B cell (primary cell): ENCODE measurements at regions of chr13 and their contacts with region 1.

Region 1: DNA sequence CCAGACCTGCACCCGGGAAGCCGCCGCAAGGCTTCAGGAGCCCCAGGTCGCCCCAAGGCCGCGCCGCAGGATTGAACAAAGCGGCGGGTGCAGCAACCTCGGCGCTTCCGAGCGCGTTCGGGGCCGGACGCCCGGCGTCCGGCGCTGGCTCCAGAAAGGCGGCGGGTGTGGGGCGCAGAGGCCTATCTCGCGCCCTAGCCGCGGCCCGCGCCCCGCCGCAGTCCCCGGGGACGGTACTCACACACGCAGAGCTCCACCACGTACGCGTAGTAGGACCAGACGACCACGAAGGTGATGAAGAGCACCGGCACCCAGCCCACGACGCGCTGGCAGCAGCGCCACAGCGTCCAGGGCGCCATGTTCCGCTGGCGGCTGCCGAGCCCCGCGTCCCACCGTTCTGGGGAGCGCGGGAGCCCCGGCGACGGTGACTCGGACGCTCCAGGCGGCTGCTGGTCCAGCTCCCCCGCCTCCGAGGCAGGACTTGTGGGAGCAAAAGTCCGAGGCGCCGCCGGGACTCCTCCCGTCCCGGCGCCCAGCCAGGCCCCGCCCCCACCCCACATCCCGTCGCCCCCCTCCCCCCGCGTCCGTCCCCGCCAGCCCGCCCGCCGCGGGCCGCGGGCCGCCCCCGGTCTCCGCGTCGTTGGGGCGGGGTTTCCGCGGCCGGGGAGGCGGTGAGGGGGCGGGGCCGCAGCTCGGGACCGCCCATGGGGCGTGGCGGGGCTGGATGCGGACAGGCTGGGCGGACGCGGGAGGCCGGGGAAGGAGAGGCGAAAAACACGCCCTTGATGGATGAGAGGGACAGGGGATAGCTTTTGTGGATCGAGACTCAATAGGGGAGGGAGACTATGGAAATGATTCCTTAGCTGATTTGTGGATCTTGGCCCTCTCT is at the start of gene ZDHHC20:
- DNase-seq: peak; percentile 91
- ATAC-seq: peak; percentile 93
- H3K4me3 ChIP-seq: peak within 1 kb of the TSS; percentile 51 to 94 (median 85)
- H3K4me3 Mint-ChIP-seq: peak within 1 kb of the TSS; percentile 93
- H3K27ac ChIP-seq: peak within 1 kb of the TSS; percentile 64 to 86
- H3K27ac Mint-ChIP-seq: peak within 1 kb of the TSS; percentile 96
- H3K4me1 ChIP-seq: peaks cover 13 to 17% of the 10 kb centered on the region in 2 donors
- H3K4me1 Mint-ChIP-seq: peaks cover 34% of the 10 kb centered on the region
- H3K27me3 ChIP-seq: no peaks in the 10 kb centered on the region
- H3K27me3 Mint-ChIP-seq: no peaks in the 10 kb centered on the region
- CTCF ChIP-seq: no peak
- total RNA-seq, gene ZDHHC20: 57.7 and 61.5 TPM in 2 replicates

Region 2: DNA sequence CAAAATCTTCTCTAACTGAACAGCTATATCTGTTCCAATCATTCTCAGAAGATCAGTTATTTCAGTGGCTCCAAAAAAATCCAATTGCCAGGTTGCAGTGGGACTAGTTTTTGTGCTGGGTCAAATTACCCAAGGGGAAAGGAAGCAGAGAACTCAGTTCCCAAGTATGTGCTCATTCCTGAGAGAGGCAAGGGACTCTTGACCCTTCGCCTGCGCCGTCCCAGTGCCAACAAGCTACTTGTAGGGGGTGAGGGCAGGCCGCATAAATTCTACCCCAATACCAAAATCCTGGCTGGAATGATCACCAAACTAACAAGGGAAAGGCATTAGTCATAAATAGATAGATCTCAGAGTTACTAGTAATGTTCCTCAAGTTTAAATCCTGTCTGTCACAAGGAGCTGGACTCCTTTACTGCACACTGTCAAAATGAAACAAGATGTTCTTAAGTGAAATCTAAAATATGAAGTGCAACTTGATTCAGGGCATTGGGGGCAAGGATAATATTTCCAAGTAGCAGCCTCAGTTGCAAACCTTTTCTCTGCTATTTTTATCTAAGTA is 607.1 kb before region 1 on chr13:
- CTCF ChIA-PET with region 1: no interaction called
- POLR2A ChIA-PET with region 1: no interaction called
- intact Hi-C with region 1: no loop called
- DNase-seq: no peak
- ATAC-seq: no peak
- H3K4me3 ChIP-seq: no peak overlapping the region
- H3K4me3 Mint-ChIP-seq: no peak overlapping the region
- H3K27ac ChIP-seq: no peak overlapping the region
- H3K27ac Mint-ChIP-seq: no peak overlapping the region
- H3K4me1 ChIP-seq: no peaks in the 10 kb centered on the region
- H3K4me1 Mint-ChIP-seq: no peaks in the 10 kb centered on the region
- H3K27me3 ChIP-seq: no peaks in the 10 kb centered on the region
- H3K27me3 Mint-ChIP-seq: no peaks in the 10 kb centered on the region
- CTCF ChIP-seq: no peak

Region 3: DNA sequence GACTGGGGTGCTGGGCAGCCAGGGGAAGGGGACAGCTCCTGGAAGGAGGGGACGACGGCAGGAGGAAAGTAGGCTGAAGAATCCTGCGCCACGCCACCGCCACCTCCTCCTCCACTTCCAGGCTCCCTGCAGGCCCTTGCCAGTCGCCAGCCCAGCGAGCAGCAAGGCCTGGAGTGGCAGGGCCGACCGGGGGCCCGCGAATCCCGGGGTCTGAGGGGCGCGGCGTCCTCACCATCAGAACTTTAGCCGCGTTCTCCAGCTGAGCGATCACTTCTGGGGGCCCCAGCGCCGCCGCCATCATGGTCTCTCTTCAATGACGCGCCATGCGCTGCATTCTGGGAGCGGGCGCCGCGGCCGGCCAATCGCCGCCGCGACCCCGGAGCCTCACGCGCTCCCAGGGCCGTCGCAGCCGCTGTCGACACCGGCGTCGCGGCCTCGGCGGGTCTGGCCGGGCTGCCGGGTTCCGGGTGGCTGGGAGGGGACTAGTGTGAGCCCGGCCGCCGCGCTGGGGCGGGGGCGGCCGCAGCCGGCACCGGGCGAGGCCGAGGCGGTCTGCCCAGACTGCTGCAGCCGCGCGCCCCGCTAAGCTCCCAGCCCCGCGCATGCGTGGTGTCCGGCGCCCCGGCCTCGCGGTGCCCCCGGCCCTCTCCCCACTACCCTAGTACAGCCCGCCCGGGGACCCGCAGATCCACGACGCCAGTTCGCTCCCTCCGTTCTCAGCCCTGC is 556.5 kb before region 1 on chr13 and contains the start of gene XPO4:
- CTCF ChIA-PET with region 1: no interaction called
- POLR2A ChIA-PET with region 1: no interaction called
- intact Hi-C with region 1: loop called (anchors 1 kb)
- DNase-seq: peak; percentile 89
- ATAC-seq: peak; percentile 91
- H3K4me3 ChIP-seq: peak within 1 kb of the TSS; percentile 62 to 98 (median 96)
- H3K4me3 Mint-ChIP-seq: peak within 1 kb of the TSS; percentile 94
- H3K27ac ChIP-seq: peak within 1 kb of the TSS; percentile 91 to 97
- H3K27ac Mint-ChIP-seq: peak within 1 kb of the TSS; percentile 94
- H3K4me1 ChIP-seq: peaks cover 10 to 11% of the 10 kb centered on the region in 2 donors
- H3K4me1 Mint-ChIP-seq: peaks cover 30% of the 10 kb centered on the region
- H3K27me3 ChIP-seq: no peaks in the 10 kb centered on the region
- H3K27me3 Mint-ChIP-seq: no peaks in the 10 kb centered on the region
- CTCF ChIP-seq: no peak
- total RNA-seq, gene XPO4: 25.9 and 30.6 TPM in 2 replicates

Region 4: GRCh38 chr13:21176220-21176982 is 282.7 kb before region 1 on chr13 and contains the starts of genes MRPL57 and SKA3:
- CTCF ChIA-PET with region 1: no interaction called
- POLR2A ChIA-PET with region 1: interaction called, 4 read pairs
- intact Hi-C with region 1: loop called (anchors 1 kb)
- DNase-seq: peak; percentile 95
- ATAC-seq: peak; percentile 93
- H3K4me3 ChIP-seq: peak within 1 kb of the TSS; percentile 67 to 97 (median 94)
- H3K4me3 Mint-ChIP-seq: peak within 1 kb of the TSS; percentile 98
- H3K27ac ChIP-seq: peak within 1 kb of the TSS; percentile 82 to 85
- H3K27ac Mint-ChIP-seq: peak within 1 kb of the TSS; percentile 97
- H3K4me1 ChIP-seq: peaks cover 11 to 15% of the 10 kb centered on the region in 2 donors
- H3K4me1 Mint-ChIP-seq: peaks cover 15% of the 10 kb centered on the region
- H3K27me3 ChIP-seq: no peaks in the 10 kb centered on the region
- H3K27me3 Mint-ChIP-seq: no peaks in the 10 kb centered on the region
- CTCF ChIP-seq: peak; percentile 22
- total RNA-seq, gene MRPL57: 9.7 and 12.1 TPM in 2 replicates
- total RNA-seq, gene SKA3: 0.20 and 0.53 TPM in 2 replicates

Region 5: DNA sequence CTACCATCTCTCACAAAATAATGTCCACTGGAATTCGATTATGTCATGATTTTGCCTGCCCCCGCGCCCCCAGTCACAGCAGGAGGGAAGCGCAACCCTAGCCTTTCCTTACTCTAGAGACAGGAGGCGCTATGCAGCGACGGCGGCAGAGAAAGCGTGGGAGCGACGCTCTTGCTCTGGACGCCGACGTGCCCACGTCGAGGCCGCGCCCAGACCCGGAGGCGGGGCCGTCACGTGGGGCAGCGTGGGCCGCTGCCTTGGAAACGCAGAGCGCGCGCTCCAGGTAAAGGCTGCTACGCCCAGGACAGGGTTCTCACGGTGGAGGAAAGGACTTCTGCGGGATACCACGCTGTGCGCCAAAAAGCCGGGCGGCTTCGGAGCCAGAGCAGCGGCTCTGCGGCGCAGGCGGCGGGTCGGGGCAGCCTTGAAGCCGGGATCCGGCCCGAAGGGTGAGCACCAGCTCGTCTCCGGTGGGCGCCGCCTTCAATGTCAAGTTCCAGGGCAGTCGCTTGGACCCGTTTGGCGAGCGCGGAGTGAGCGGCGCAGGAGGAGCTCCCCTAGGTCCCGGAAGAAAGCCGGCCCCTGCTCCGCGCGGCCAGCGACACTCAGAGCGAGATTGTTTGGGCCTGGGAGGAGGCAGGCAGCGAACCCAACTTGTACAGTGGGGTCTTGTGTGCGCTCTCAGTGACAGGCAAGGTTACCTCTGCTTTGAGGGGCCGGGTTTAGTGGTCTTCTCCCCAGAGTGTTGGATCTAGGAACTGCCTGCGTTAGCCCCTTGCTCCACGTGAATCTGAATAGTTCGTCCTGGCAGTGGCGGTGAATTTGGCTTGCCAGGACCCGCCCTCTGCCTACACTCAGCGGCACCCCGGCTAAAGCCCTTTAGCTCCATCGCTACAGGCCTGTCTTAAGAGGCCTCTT is 160.9 kb before region 1 on chr13:
- CTCF ChIA-PET with region 1: interaction called, 7 read pairs
- POLR2A ChIA-PET with region 1: no interaction called
- intact Hi-C with region 1: loop called (anchors 1 kb)
- DNase-seq: peak; percentile 93
- ATAC-seq: peak; percentile 96
- H3K4me3 ChIP-seq: peak overlapping the region; percentile 8 to 88 (median 75)
- H3K4me3 Mint-ChIP-seq: peak overlapping the region; percentile 89
- H3K27ac ChIP-seq: peak overlapping the region; percentile 7 to 77
- H3K27ac Mint-ChIP-seq: peak overlapping the region; percentile 89
- H3K4me1 ChIP-seq: peaks cover 15 to 18% of the 10 kb centered on the region in 2 donors
- H3K4me1 Mint-ChIP-seq: peaks cover 17% of the 10 kb centered on the region
- H3K27me3 ChIP-seq: no peaks in the 10 kb centered on the region
- H3K27me3 Mint-ChIP-seq: no peaks in the 10 kb centered on the region
- CTCF ChIP-seq: peak; percentile 93

Region 6: DNA sequence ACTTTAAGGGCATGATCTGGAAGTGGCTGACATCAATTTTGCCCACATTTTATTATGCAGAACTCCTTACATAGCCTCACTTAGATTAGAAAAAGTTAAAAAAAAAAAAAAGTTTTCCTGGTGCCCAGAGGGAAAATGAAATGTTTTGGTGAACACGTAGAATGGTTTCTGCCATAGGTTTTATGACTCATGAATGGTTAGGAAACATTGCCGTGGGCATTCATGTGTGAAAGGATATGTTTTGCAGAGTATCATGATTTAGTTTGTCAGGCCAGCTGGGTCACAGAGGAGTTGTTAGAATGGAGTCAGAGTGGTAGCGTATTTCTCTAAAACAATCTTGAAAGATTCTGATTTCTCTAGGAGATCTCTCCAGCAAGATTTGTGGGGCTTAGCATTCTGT is 148.8 kb before region 1 on chr13:
- CTCF ChIA-PET with region 1: no interaction called
- POLR2A ChIA-PET with region 1: no interaction called
- intact Hi-C with region 1: no loop called
- DNase-seq: no peak
- ATAC-seq: no peak
- H3K4me3 ChIP-seq: no peak overlapping the region
- H3K4me3 Mint-ChIP-seq: no peak overlapping the region
- H3K27ac ChIP-seq: no peak overlapping the region
- H3K27ac Mint-ChIP-seq: no peak overlapping the region
- H3K4me1 ChIP-seq: no peaks in the 10 kb centered on the region
- H3K4me1 Mint-ChIP-seq: no peaks in the 10 kb centered on the region
- H3K27me3 ChIP-seq: no peaks in the 10 kb centered on the region
- H3K27me3 Mint-ChIP-seq: no peaks in the 10 kb centered on the region
- CTCF ChIP-seq: no peak

Region 7: DNA sequence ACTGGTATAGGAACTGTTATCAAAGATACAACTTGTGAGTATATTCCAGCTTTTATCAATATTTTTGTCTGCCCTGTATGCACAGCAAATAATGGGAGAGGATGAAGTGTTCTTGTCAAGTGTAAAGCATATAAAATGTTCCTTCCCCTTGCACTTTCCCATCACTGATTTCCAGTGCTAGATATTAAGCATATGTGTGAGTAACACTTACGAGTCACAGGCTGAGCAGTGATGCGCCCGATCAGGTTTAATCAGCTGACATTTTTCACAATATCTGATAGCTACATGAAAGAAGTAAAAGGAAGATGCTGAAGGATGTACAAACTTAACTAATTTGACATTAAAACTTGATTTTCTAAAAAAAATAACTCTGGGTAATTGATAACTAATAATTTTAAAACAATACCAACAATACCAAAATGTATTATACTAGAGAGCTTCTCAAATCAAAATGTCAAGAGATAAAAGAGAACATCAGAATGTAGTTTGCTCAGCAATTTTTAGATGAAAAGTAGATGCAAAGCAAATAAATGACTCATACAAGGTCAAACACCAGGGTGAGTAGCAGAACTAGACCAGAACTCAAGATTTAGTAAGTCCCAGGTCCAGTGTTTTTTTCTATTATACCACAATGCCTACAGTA is 56.4 kb before region 1 on chr13:
- CTCF ChIA-PET with region 1: no interaction called
- POLR2A ChIA-PET with region 1: no interaction called
- intact Hi-C with region 1: loop called (anchors 10 kb)
- DNase-seq: no peak
- ATAC-seq: no peak
- H3K4me3 ChIP-seq: no peak overlapping the region
- H3K4me3 Mint-ChIP-seq: no peak overlapping the region
- H3K27ac ChIP-seq: no peak overlapping the region
- H3K27ac Mint-ChIP-seq: no peak overlapping the region
- H3K4me1 ChIP-seq: no peaks in the 10 kb centered on the region
- H3K4me1 Mint-ChIP-seq: no peaks in the 10 kb centered on the region
- H3K27me3 ChIP-seq: no peaks in the 10 kb centered on the region
- H3K27me3 Mint-ChIP-seq: no peaks in the 10 kb centered on the region
- CTCF ChIP-seq: no peak

Region 8: DNA sequence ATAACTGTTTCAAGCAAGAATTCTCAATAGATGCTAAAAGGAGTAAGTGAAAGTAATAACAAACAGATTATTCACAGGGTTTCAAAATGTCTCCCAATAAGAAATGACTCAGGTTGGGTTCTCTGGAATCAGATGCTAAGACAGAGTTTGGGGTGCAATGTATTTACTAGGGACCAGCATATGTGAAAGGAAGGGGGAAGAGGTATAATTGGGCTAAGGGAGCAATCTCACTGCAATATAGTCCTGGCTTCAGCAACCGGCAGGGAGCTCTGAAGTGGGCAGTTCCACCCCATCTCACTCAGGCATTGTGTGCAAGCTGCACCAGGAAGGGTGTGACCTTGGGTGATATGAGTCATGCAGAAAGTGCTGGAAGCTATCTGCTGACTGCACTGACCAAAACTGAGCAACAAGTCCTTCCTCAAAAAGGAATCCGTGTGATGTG is 23.3 kb before region 1 on chr13:
- CTCF ChIA-PET with region 1: interaction called, 4 read pairs
- POLR2A ChIA-PET with region 1: no interaction called
- intact Hi-C with region 1: loop called (anchors 1 kb)
- DNase-seq: peak; percentile 59
- ATAC-seq: peak; percentile 99
- H3K4me3 ChIP-seq: peak overlapping the region in 2 of 5 experiments; percentile 23 to 27
- H3K4me3 Mint-ChIP-seq: peak overlapping the region; percentile 73
- H3K27ac ChIP-seq: peak overlapping the region; percentile 50 to 60
- H3K27ac Mint-ChIP-seq: peak overlapping the region; percentile 92
- H3K4me1 ChIP-seq: peaks cover 21 to 26% of the 10 kb centered on the region in 2 donors
- H3K4me1 Mint-ChIP-seq: peaks cover 49% of the 10 kb centered on the region
- H3K27me3 ChIP-seq: no peaks in the 10 kb centered on the region
- H3K27me3 Mint-ChIP-seq: no peaks in the 10 kb centered on the region
- CTCF ChIP-seq: no peak

Region 9: DNA sequence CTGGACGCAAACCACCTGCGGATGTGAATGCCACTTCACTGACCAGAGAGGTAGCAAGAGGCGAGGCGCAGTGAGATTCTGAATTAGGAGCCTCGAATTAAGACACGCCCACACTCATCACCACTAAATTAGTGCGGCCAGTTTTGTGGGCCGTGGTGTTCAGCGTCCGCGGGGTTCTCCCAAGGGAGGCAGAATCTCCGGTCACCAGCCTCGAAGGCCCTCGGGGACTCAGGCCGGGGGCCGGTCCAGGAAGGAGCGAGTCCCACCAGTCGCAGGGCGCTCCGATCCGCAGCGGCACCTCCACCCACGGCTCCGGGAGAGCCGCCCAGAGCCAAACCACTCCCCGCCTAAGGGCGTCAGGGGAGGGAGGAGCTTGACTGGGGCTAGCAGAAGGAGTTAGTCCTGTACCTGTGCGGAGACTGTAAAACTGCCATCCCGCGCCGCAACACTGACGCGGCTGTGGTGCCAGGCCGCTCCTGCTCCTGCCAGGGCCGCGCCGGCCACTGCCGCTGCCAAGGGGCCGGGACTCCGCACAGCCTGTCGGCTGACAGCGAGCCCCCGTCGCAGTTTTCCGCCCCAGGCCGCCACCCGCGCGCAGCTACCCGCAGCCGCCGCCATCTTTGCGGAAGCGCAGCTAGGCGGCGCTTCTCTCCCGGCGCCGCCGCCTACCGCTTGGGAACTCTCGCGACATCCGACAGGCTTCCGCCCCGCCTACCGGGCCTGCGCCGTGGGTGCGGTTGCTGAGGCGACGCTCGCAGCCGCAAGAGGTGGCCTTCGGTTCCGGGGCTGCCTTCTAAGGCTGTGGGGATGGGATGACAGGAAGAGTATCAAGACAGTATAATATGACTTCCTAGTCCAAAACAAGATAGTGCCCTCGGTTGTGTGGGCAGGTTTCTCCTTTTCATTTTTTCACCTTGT is 144.7 kb after region 1 on chr13 and contains the start of gene MICU2:
- CTCF ChIA-PET with region 1: no interaction called
- POLR2A ChIA-PET with region 1: interaction called, 3 read pairs
- intact Hi-C with region 1: loop called (anchors 1 kb)
- DNase-seq: peak; percentile 98
- ATAC-seq: peak; percentile 93
- H3K4me3 ChIP-seq: peak within 1 kb of the TSS; percentile 59 to 92 (median 75)
- H3K4me3 Mint-ChIP-seq: peak within 1 kb of the TSS; percentile 95
- H3K27ac ChIP-seq: peak within 1 kb of the TSS; percentile 80 to 98
- H3K27ac Mint-ChIP-seq: peak within 1 kb of the TSS; percentile 98
- H3K4me1 ChIP-seq: peaks cover 17 to 21% of the 10 kb centered on the region in 2 donors
- H3K4me1 Mint-ChIP-seq: peaks cover 35% of the 10 kb centered on the region
- H3K27me3 ChIP-seq: peaks cover 2 to 12% (median 3%) of the 10 kb centered on the region in 4 experiments
- H3K27me3 Mint-ChIP-seq: peaks cover 29% of the 10 kb centered on the region
- CTCF ChIP-seq: no peak
- total RNA-seq, gene MICU2: 52.2 and 52.5 TPM in 2 replicates

Region 10: GRCh38 chr13:21759463-21759862 is 300.4 kb after region 1 on chr13:
- CTCF ChIA-PET with region 1: no interaction called
- POLR2A ChIA-PET with region 1: no interaction called
- intact Hi-C with region 1: no loop called
- DNase-seq: no peak
- ATAC-seq: no peak
- H3K4me3 ChIP-seq: no peak overlapping the region
- H3K4me3 Mint-ChIP-seq: no peak overlapping the region
- H3K27ac ChIP-seq: no peak overlapping the region
- H3K27ac Mint-ChIP-seq: no peak overlapping the region
- H3K4me1 ChIP-seq: no peaks in the 10 kb centered on the region
- H3K4me1 Mint-ChIP-seq: no peaks in the 10 kb centered on the region
- H3K27me3 ChIP-seq: no peaks in the 10 kb centered on the region
- H3K27me3 Mint-ChIP-seq: peaks cover 4% of the 10 kb centered on the region
- CTCF ChIP-seq: no peak